Activated CD8-positive, alpha-beta T cell treated with anti-CD3 and anti-CD28 coated beads, Interleukin-2, amount 10 ng/mL, durations not matched to agents 7 days and 5 days (primary cell): ENCODE measurements at regions of chr19 and their contacts with region 1.

Region 1: DNA sequence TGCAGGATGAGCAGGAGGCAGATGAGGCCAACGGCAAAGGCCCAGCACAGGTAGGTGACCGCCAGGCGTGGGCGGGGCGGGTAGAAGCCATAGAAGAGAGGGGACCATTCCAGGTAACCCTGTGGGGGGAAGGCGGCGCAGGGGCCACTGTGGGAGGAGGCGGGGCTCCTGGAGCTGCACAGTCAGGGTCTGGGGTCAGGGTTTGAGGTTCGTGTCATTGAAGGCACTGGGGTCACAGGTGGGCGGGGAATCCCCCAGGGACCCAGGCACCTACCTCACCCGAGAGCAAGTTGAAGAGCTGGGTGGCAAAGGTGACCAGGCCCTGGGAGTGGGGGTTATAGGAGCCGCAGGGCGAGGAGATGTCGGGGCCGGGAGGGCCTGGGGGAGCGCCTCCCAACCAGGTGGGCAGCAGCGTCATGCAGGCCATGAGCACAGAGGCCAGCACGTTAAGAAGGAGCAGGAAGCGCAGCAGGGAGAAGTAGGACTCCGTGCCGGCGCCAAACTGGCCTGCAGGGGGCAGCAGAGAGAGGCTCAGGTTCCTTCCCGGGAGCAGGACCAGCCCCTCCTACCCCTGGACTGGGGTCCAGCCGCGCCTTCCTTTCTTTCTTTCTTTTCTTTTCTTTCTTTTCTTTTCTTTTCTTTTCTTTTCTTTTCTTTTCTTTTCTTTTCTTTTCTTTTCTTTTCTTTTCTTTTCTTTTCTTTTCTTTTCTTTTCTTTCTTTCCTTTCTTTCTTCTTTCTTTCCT is 4.6 kb downstream of the TMC4 start:
- DNase-seq: peak; percentile 93
- ATAC-seq: peak; percentile 89
- H3K4me3 Mint-ChIP-seq: no peak overlapping the region
- H3K27ac Mint-ChIP-seq: no peak overlapping the region
- H3K4me1 Mint-ChIP-seq: peaks cover 21% of the 10 kb centered on the region
- H3K27me3 Mint-ChIP-seq: no peaks in the 10 kb centered on the region

Region 2: DNA sequence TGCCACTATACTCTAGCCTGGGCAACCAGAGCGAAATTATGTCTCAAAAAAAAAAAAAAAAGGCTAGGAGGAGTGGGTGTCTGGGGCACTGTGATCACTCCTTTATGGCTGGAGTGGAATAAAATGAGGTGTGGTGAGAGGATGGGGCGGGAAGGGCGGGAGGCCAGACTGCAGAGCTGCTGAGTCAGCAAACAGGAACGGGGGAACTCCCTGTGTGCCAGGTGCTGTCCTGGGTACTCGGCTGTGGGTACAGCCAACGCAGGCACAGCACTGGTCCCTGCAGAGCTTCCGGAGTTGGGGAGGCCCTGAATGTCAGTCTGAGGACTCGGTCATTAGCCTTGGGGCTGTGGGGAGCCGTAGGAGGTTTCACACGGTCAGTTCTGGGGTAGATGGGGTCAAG is 47.1 kb before region 1 on chr19:
- CTCF ChIA-PET with region 1: no interaction called
- POLR2A ChIA-PET with region 1: no interaction called
- DNase-seq: no peak
- ATAC-seq: no peak
- H3K4me3 Mint-ChIP-seq: no peak overlapping the region
- H3K27ac Mint-ChIP-seq: no peak overlapping the region
- H3K4me1 Mint-ChIP-seq: peaks cover 12% of the 10 kb centered on the region
- H3K27me3 Mint-ChIP-seq: no peaks in the 10 kb centered on the region

Region 3: GRCh38 chr19:54189735-54190502 is 21.6 kb after region 1 on chr19:
- CTCF ChIA-PET with region 1: interaction called, 11 read pairs
- POLR2A ChIA-PET with region 1: interaction called, 5 read pairs
- DNase-seq: peak; percentile 100
- ATAC-seq: peak; percentile 63
- H3K4me3 Mint-ChIP-seq: peak overlapping the region; percentile 82
- H3K27ac Mint-ChIP-seq: peak overlapping the region; percentile 98
- H3K4me1 Mint-ChIP-seq: peaks cover 39% of the 10 kb centered on the region
- H3K27me3 Mint-ChIP-seq: no peaks in the 10 kb centered on the region

Region 4: DNA sequence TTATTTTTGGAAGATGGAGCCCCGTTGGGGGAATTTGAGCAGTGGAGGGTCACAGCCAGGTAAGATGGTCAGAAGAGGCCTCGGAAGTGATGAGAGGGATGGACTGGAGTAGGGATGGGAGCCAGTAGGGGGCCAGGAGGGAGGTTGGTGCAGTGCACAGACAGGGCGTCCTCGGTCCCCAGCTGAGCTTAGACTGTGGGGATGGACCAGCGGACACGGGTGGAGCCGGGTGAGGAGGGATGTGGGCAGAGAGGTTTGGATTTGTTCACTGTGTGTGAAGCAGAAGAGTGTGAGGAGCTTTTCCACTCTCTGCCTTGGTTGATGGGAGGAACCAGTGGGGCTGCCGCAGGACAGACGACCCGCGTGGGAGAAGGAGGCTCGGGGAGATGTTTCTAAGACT is 42.9 kb after region 1 on chr19:
- CTCF ChIA-PET with region 1: no interaction called
- POLR2A ChIA-PET with region 1: no interaction called
- DNase-seq: no peak
- ATAC-seq: peak; percentile 1
- H3K4me3 Mint-ChIP-seq: peak overlapping the region; percentile 2
- H3K27ac Mint-ChIP-seq: peak overlapping the region; percentile 82
- H3K4me1 Mint-ChIP-seq: peaks cover 56% of the 10 kb centered on the region
- H3K27me3 Mint-ChIP-seq: no peaks in the 10 kb centered on the region

Region 5: DNA sequence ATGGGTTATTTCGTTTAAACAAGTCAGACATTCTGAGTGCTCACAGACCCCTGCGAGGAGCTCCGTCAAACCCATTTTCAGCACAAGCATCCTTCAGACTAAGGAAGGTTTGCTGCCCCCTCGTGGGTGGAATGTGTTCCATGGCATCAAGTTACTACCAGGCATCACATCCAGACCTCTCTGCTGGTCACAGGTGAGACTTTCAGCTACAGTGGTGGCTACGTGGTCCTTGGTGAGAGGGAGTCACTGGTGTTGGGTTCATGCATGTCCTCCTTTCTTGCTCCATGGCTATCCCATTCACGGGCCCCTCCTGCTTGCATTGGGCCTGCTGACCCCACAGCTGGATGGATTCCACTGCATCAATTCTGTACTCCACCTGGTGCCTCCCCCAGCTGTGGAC is 97.8 kb after region 1 on chr19:
- CTCF ChIA-PET with region 1: interaction called, 22 read pairs
- POLR2A ChIA-PET with region 1: no interaction called
- DNase-seq: peak; percentile 84
- ATAC-seq: peak; percentile 85
- H3K4me3 Mint-ChIP-seq: no peak overlapping the region
- H3K27ac Mint-ChIP-seq: no peak overlapping the region
- H3K4me1 Mint-ChIP-seq: no peaks in the 10 kb centered on the region
- H3K27me3 Mint-ChIP-seq: peaks cover 21% of the 10 kb centered on the region